ENCODE measurements at regions of chr12 and their contacts with region 1.

Region 1: GRCh38 chr12:55996715-55997534 is at the start of gene SUOX:
- DNase-seq: peak; percentile 96
- ATAC-seq: peak; percentile 99
- H3K4me3 ChIP-seq: peak within 1 kb of the TSS; percentile 68
- H3K27ac ChIP-seq: peak within 1 kb of the TSS; percentile 66
- H3K4me1 ChIP-seq: peaks cover 4% of the 10 kb centered on the region
- H3K27me3 ChIP-seq: no peaks in the 10 kb centered on the region
- CTCF ChIP-seq: no peak
- POLR2A ChIP-seq: no peak; the same call in 1 of the 2 replicates
- RAD21 ChIP-seq: no peak; the same call in 1 of the 2 replicates
- total RNA-seq, gene SUOX: 13.1 and 19.4 TPM in 2 replicates

Region 2: DNA sequence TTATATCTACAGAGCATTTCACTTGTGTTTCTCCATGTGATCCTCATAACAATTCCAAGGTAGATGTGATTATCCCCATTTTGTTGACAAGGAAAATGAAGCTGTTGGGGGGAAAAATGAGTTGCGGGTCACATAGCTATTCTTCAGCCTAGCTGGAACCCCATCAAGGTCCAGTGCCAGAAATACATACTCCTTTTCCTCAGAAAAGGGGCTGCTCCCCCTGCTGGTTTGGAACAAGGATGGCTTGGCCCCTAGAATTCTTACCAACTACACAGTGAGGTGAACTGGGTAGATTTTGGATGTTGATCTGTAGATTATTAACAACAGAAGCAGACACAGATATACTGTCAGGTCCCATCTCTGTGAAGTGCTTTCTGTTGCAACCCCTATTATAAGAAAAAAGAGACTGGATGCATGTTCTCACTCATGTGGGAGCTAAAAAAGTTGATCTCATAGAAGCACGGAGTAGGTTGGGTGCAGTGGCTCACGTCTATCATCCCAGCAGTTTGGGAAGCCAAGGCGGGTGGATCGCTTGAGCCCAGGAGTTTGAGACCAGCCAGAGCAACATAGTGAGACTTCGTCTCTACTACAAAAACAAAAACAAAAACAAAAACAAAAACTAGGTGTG is 32.9 kb after region 1 on chr12:
- CTCF ChIA-PET with region 1: interaction called, 11 read pairs
- POLR2A ChIA-PET with region 1: no interaction called
- dilution Hi-C with region 1: no loop called
- in situ Hi-C with region 1: no loop called
- intact Hi-C with region 1: loop called (anchors 1 kb)
- DNase-seq: peak; percentile 67
- ATAC-seq: peak; percentile 96
- H3K4me3 ChIP-seq: no peak overlapping the region
- H3K27ac ChIP-seq: no peak overlapping the region
- H3K4me1 ChIP-seq: peaks cover 2% of the 10 kb centered on the region; the same call in 1 of the 2 replicates
- H3K27me3 ChIP-seq: no peaks in the 10 kb centered on the region
- CTCF ChIP-seq: peak; percentile 80
- POLR2A ChIP-seq: no peak
- RAD21 ChIP-seq: peak; percentile 72

Region 3: GRCh38 chr12:56104109-56104814 is 107.3 kb after region 1 on chr12 and contains the start of gene PA2G4:
- CTCF ChIA-PET with region 1: no interaction called
- POLR2A ChIA-PET with region 1: no interaction called
- dilution Hi-C with region 1: no loop called
- in situ Hi-C with region 1: no loop called
- intact Hi-C with region 1: loop called (anchors 10 kb)
- DNase-seq: peak; percentile 98
- ATAC-seq: peak; percentile 97
- H3K4me3 ChIP-seq: peak within 1 kb of the TSS; percentile 88
- H3K27ac ChIP-seq: peak within 1 kb of the TSS; percentile 94
- H3K4me1 ChIP-seq: peaks cover 5% of the 10 kb centered on the region; the same call in 1 of the 2 replicates
- H3K27me3 ChIP-seq: no peaks in the 10 kb centered on the region
- CTCF ChIP-seq: no peak
- POLR2A ChIP-seq: peak; percentile 70
- RAD21 ChIP-seq: no peak; the same call in 1 of the 2 replicates
- total RNA-seq, gene PA2G4: 198 and 251 TPM in 2 replicates

Region 4: GRCh38 chr12:56146492-56147460 is 149.9 kb after region 1 on chr12:
- CTCF ChIA-PET with region 1: no interaction called
- POLR2A ChIA-PET with region 1: no interaction called
- dilution Hi-C with region 1: no loop called
- in situ Hi-C with region 1: no loop called
- intact Hi-C with region 1: no loop called
- DNase-seq: no peak
- ATAC-seq: peak; percentile 31
- H3K4me3 ChIP-seq: no peak overlapping the region
- H3K27ac ChIP-seq: no peak overlapping the region
- H3K4me1 ChIP-seq: peaks cover 4% of the 10 kb centered on the region
- H3K27me3 ChIP-seq: no peaks in the 10 kb centered on the region
- CTCF ChIP-seq: no peak
- POLR2A ChIP-seq: no peak
- RAD21 ChIP-seq: no peak

Region 5: GRCh38 chr12:56158029-56158925 is 161.4 kb after region 1 on chr12 and contains the start of gene MYL6:
- CTCF ChIA-PET with region 1: no interaction called
- POLR2A ChIA-PET with region 1: no interaction called
- dilution Hi-C with region 1: no loop called
- in situ Hi-C with region 1: no loop called
- intact Hi-C with region 1: no loop called
- DNase-seq: peak; percentile 99
- ATAC-seq: peak; percentile 70
- H3K4me3 ChIP-seq: peak within 1 kb of the TSS; percentile 73
- H3K27ac ChIP-seq: peak within 1 kb of the TSS; percentile 90
- H3K4me1 ChIP-seq: peaks cover 18% of the 10 kb centered on the region
- H3K27me3 ChIP-seq: no peaks in the 10 kb centered on the region
- CTCF ChIP-seq: no peak
- POLR2A ChIP-seq: peak; percentile 99
- RAD21 ChIP-seq: no peak
- total RNA-seq, gene MYL6: 4,816 and 6,155 TPM in 2 replicates